IMR-90 (cell line): ENCODE measurements at regions of chr2 and their contacts with region 1.

Region 1: GRCh38 chr2:109128048-109128465 is 948 bp upstream of the SH3RF3 start:
- DNase-seq: peak; percentile 91
- ATAC-seq: peak; percentile 68
- H3K4me3 ChIP-seq: peak overlapping the region; percentile 58
- H3K27ac ChIP-seq: peak overlapping the region; percentile 83
- H3K4me1 ChIP-seq: peaks cover 13% of the 10 kb centered on the region
- H3K27me3 ChIP-seq: peaks cover 2% of the 10 kb centered on the region; the same call in 1 of the 2 replicates
- CTCF ChIP-seq: peak; percentile 98
- POLR2A ChIP-seq: peak; percentile 61
- RAD21 ChIP-seq: peak; percentile 98

Region 2: DNA sequence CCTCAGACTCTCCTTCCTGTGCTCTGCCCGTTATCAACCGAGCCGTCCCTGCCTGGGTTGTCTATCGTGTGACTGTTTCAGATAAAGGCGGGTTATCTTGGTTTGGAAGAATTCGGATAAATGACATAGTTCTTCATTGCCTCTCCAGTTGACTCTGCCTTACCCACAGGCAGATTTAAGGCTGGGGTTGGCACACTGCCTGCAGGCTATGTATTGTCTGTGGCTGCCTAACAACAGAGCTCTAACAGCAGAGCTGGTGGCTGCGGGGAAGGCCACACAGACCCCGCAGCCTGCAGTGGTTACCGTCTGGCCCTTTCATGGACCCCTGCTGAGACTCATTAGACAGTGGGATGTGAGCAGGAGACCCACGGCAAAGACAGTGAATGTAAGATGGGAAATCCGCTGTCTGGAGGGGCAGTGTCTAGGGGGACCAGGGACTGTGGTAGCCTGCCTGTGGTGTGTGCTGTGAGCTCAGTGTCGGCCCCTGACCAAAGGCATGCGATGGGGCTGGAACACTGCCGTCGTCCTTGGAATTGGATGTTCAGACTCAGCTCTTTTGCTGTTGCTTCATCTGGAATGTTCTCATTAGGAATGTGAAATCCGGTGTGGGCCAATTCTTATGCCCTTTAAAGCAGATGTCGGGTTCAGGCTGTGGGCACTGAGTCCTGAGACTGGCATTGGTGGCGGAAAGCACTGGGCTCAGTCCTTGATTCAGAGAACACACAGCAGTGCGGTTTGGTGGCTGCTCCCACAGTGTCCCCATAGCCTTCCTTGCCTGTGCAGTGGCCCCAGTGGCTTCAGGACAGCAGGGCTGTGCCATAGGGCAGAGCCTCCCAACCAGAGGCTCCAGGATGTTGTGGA is 45.5 kb after region 1 on chr2:
- CTCF ChIA-PET with region 1: no interaction called
- POLR2A ChIA-PET with region 1: interaction called, 3 read pairs
- dilution Hi-C with region 1: no loop called
- in situ Hi-C with region 1: no loop called
- intact Hi-C with region 1: loop called (anchors 2 kb)
- DNase-seq: peak; percentile 87
- ATAC-seq: peak; percentile 52
- H3K4me3 ChIP-seq: no peak overlapping the region
- H3K27ac ChIP-seq: peak overlapping the region; percentile 82
- H3K4me1 ChIP-seq: peaks cover 45% of the 10 kb centered on the region
- H3K27me3 ChIP-seq: no peaks in the 10 kb centered on the region
- CTCF ChIP-seq: no peak
- POLR2A ChIP-seq: peak; percentile 58; the same call in 1 of the 2 replicates
- RAD21 ChIP-seq: no peak

Region 3: DNA sequence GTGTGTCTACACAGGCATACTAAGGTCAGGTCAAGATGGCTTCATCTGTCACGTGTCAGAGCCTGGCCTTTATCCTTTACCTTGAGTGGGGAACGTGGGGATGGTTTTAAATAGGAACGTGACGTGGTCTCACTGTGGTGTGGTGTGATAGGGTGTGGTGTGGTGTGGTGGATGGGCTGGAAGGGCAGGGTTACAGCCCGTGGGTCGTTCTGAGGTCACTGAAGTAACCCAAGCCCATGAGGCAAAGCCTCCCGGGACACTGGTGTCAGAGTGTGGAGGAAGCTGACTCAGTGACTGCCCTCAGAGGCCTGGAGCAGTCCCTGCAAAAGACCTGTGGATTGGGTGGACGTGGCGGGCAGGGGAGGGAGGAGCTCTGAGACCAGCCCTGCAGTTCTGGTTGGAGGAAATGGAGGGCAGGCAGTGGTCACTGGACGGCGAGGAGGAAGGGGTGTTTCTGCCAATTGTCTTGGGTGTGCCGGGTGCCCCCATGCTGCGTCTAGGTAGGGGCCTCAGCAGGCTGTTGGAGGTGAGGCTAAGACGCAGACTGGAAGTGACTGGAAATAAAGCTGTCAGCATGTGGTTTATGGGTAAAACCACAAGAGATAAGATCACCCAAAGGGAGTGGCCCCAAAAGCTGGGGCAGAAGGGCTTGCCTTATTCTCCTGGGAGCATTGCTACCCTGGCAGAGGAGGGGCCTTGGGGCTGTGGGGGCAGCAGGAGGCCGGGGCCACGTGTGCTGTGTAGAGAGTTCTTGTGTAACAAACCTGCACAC is 85.8 kb after region 1 on chr2:
- CTCF ChIA-PET with region 1: no interaction called
- POLR2A ChIA-PET with region 1: no interaction called
- dilution Hi-C with region 1: no loop called
- in situ Hi-C with region 1: loop called (anchors 10 kb)
- intact Hi-C with region 1: no loop called
- DNase-seq: peak; percentile 67
- ATAC-seq: peak; percentile 8; the same call in 1 of the 2 replicates
- H3K4me3 ChIP-seq: no peak overlapping the region
- H3K27ac ChIP-seq: no peak overlapping the region
- H3K4me1 ChIP-seq: peaks cover 42% of the 10 kb centered on the region
- H3K27me3 ChIP-seq: no peaks in the 10 kb centered on the region
- CTCF ChIP-seq: no peak
- POLR2A ChIP-seq: no peak
- RAD21 ChIP-seq: no peak

Region 4: DNA sequence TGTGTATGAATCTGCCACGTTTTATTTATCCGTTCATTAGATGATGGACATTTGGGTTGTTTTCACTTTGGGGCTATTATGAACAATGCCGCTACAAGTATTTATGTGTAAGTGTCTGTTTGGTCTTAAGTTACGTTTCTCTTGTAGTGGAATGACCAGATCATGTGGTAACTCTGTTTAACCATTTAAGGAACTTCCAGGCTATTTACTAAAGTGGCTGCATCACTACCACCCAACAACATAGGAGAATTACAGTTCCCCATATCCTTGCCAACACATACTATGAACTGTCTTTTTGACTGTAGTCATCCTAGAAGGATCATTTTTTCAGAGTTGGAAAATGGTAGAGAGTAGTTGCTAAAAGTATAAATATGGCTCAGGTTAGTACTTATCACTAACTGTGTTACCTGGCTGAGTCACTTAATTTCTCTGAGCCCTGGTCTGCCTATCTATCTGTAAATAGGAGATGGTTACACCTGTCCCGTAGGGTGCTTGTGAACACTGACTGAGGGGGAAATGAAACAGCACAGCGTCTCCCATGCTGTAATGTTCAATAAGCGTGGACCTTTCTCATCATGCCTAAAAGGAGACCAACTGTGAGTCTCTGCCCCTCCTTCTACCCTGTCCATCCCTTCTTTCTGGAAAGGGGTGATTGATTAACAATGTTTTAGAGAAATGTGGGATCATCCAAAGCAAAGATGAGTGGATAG is 104.1 kb after region 1 on chr2:
- CTCF ChIA-PET with region 1: no interaction called
- POLR2A ChIA-PET with region 1: no interaction called
- dilution Hi-C with region 1: no loop called
- in situ Hi-C with region 1: no loop called
- intact Hi-C with region 1: no loop called
- DNase-seq: no peak
- ATAC-seq: no peak
- H3K4me3 ChIP-seq: no peak overlapping the region
- H3K27ac ChIP-seq: no peak overlapping the region
- H3K4me1 ChIP-seq: peaks cover 14% of the 10 kb centered on the region
- H3K27me3 ChIP-seq: no peaks in the 10 kb centered on the region
- CTCF ChIP-seq: no peak
- POLR2A ChIP-seq: no peak
- RAD21 ChIP-seq: no peak

Region 5: DNA sequence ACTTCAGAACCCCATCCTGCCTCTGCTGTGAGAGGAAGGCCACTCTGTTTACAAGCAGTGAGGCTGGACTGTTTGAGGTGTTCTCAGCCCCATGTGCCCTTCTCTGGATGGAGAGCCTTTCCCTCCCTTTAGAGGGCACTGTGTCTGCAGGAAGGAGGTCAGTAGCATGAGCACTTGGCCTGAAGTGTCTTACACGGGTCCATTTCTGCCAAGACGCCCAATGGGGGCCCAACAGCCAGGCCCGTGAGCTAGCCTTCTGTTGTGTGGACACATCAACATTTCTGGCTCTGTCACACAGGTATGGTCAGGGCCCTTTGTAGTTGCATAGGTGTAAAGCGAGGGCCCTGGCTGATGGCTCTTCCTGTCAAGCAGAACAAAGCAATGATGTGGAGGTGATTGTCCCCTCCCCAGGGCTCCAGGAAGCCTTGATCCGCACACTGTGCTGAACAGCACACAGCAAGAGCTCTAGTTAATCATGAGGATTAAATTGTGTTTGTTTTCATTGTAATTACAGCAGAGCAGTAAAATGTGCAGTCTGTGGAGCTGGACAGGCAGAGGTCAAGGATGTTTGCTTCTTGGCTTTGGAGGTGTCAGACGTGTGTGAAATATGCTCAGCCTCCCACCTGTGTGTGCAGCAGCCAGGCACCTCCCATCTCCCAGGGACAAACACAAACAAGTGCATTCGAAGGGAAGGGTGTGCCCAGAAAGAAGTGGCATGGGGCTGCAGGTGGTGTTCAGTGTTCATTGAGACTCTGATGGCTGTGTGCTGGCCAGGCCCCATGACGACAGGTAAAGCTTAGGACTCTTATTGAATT is 133.0 kb after region 1 on chr2:
- CTCF ChIA-PET with region 1: no interaction called
- POLR2A ChIA-PET with region 1: no interaction called
- dilution Hi-C with region 1: no loop called
- in situ Hi-C with region 1: no loop called
- intact Hi-C with region 1: loop called (anchors 5 kb)
- DNase-seq: peak; percentile 34
- ATAC-seq: no peak
- H3K4me3 ChIP-seq: no peak overlapping the region
- H3K27ac ChIP-seq: no peak overlapping the region
- H3K4me1 ChIP-seq: peaks cover 30% of the 10 kb centered on the region
- H3K27me3 ChIP-seq: no peaks in the 10 kb centered on the region
- CTCF ChIP-seq: peak; percentile 34
- POLR2A ChIP-seq: no peak
- RAD21 ChIP-seq: peak; percentile 45

Region 6: GRCh38 chr2:109331896-109332848 is 204.1 kb after region 1 on chr2:
- CTCF ChIA-PET with region 1: no interaction called
- POLR2A ChIA-PET with region 1: no interaction called
- dilution Hi-C with region 1: no loop called
- in situ Hi-C with region 1: loop called (anchors 25 kb)
- intact Hi-C with region 1: no loop called
- DNase-seq: peak; percentile 96
- ATAC-seq: peak; percentile 84
- H3K4me3 ChIP-seq: no peak overlapping the region
- H3K27ac ChIP-seq: peak overlapping the region; percentile 87
- H3K4me1 ChIP-seq: peaks cover 46% of the 10 kb centered on the region
- H3K27me3 ChIP-seq: no peaks in the 10 kb centered on the region
- CTCF ChIP-seq: no peak
- POLR2A ChIP-seq: peak; percentile 74
- RAD21 ChIP-seq: peak; percentile 33; the same call in 1 of the 2 replicates

Region 7: GRCh38 chr2:109510136-109511028 is 382.3 kb after region 1 on chr2:
- CTCF ChIA-PET with region 1: interaction called, 5 read pairs
- POLR2A ChIA-PET with region 1: no interaction called
- dilution Hi-C with region 1: no loop called
- in situ Hi-C with region 1: loop called (anchors 5 kb)
- intact Hi-C with region 1: loop called (anchors 1 kb)
- DNase-seq: peak; percentile 71
- ATAC-seq: peak; percentile 76
- H3K4me3 ChIP-seq: no peak overlapping the region
- H3K27ac ChIP-seq: no peak overlapping the region
- H3K4me1 ChIP-seq: peaks cover 8% of the 10 kb centered on the region
- H3K27me3 ChIP-seq: no peaks in the 10 kb centered on the region
- CTCF ChIP-seq: peak; percentile 92
- POLR2A ChIP-seq: no peak; the same call in 1 of the 2 replicates
- RAD21 ChIP-seq: peak; percentile 93